Activated naive CD4-positive, alpha-beta T cell treated with anti-CD3 and anti-CD28 coated beads for 36 hours (primary cell): ENCODE measurements at regions of chr17 and their contacts with region 1.

Region 1: DNA sequence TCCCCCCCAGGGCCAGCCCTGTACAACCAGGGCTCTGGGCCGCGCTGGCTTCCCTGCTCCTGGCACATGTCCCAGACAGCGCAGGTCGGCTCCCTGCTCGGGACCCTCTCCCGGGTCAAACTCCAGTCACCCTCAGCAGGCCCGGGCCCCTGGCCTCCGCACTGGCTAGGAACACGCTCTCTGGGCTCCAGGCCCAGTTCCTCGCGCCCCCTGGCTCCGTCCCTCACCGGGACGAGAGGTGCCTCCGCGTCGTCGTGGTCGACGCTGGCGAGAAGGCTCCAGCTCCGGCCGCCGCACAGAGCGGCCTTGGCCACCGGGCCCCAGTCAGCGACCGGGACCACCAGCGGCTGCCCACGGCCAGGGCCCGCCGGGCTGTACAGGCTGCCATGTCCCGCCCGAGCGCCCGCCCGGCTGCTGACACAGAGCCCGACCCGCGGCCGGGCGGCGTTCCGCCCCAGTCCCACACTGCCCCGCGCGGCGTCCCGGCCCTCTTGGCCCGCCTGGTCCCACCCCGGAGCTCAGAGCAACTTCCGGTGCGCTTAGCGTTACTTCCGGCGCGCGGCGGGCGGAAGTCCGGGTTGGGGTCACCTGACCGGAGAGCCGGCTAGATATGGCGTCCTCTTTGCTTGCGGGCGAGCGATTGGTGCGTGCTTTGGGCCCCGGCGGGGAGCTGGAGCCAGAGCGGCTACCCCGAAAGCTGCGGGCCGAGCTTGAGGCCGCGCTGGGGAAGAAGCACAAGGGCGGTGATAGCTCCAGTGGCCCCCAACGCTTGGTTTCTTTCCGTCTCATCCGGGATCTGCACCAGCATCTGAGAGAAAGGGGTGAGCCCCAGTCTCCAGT is at the start of gene POLDIP2:
- DNase-seq: peak; percentile 97
- H3K4me3 Mint-ChIP-seq: peak within 1 kb of the TSS; percentile 94
- H3K27ac Mint-ChIP-seq: peak within 1 kb of the TSS; percentile 74
- H3K4me1 Mint-ChIP-seq: peaks cover 33% of the 10 kb centered on the region
- H3K27me3 Mint-ChIP-seq: no peaks in the 10 kb centered on the region
- total RNA-seq, gene POLDIP2: 74.6 to 76.5 TPM

Region 2: DNA sequence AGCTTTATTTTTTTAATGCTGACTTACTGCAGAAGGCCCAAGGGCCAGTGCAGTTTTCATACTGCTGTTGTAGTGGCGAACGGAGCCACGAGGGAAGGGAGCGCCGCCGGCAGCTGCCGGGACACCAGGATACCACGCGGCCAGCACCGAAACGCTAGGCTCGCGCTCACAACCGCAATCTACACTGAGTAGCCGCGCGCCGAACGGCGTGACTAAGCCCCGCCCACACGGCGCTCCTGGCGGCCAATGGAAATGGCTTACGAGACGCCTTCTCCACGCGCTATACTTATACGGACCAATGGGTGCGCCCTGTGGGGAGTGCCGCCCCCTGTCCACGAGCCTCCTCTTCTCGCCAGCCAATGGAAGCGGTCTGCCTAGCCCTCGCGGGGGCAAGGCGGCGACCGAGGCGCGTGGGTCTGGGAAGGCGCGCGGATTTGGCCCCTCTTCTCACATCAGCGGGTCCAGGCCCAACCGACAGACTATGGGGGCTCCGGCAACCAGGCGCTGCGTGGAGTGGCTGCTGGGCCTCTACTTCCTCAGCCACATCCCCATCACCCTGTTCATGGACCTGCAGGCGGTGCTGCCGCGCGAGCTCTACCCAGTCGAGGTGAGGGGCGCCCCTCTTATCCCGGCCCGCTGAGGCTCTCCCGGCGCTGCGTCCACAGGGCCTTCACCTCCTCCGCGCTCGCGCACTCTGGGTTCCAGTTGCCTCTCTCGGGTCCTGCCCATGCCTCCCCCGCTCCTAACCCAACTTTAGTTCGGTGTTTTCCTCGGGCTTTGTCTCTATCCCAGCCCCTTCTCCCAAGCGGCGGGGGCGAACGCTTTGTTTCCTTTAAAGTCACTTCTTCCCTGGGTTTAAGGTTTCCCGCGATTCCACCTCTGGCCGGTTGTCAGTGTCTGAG is 38.3 kb before region 1 on chr17 and contains the start of gene TMEM97:
- CTCF ChIA-PET with region 1: interaction called, 4 read pairs
- intact Hi-C with region 1: loop called (anchors 5 kb)
- DNase-seq: peak; percentile 95
- H3K4me3 Mint-ChIP-seq: peak within 1 kb of the TSS; percentile 81
- H3K27ac Mint-ChIP-seq: peak within 1 kb of the TSS; percentile 75
- H3K4me1 Mint-ChIP-seq: peaks cover 24% of the 10 kb centered on the region
- H3K27me3 Mint-ChIP-seq: no peaks in the 10 kb centered on the region
- total RNA-seq, gene TMEM97: 25.1 to 26.0 TPM

Region 3: DNA sequence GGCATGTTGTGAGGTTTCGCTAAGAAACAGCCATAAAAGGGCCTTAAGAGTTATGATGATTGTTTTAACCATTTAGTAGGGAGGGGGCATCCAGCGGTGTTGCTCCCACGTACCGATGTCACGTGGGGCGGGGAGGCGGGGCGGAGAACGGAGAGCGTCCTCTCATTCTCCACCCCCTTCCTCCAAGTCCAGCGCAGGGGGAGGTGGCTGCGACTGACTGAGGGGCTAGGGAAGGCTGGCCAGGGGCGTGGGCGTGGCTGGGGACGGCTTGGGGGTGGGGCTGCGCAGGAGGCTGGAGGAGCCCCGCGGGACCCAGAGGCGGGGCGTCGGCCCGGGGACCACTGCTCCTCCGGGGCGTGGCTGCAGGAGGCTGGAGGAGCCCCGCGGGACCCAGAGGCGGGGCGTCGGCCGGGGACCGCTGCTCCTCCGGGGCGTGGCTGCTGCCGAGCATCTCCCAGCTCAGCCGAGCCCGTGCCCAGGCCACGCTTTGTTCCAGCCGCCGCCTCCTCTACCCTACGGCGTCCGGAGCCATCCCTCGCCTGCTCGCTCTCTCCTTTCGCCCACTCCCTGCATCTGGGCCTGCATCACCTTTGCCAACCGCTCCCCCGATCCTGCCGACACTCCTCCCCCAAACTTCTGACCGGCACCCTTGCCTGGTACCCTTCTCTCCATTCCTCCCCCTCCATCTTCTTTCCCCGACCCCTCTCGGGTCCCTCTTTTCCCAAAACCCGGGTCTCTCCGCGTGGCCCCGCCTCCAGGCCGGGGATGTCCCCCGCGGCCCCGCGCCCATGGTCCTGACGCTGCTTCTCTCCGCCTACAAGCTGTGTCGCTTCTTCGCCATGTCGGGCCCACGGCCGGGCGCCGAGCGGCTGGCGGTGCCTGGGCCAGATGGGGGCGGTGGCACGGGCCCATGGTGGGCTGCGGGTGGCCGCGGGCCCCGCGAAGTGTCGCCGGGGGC is 14.2 kb after region 1 on chr17 and contains the start of gene SARM1:
- CTCF ChIA-PET with region 1: no interaction called
- intact Hi-C with region 1: loop called (anchors 1 kb)
- DNase-seq: peak; percentile 85
- H3K4me3 Mint-ChIP-seq: peak within 1 kb of the TSS; percentile 89
- H3K27ac Mint-ChIP-seq: peak within 1 kb of the TSS; percentile 47
- H3K4me1 Mint-ChIP-seq: peaks cover 21% of the 10 kb centered on the region
- H3K27me3 Mint-ChIP-seq: no peaks in the 10 kb centered on the region
- total RNA-seq, gene SARM1: 11.7 to 12.3 TPM

Region 4: DNA sequence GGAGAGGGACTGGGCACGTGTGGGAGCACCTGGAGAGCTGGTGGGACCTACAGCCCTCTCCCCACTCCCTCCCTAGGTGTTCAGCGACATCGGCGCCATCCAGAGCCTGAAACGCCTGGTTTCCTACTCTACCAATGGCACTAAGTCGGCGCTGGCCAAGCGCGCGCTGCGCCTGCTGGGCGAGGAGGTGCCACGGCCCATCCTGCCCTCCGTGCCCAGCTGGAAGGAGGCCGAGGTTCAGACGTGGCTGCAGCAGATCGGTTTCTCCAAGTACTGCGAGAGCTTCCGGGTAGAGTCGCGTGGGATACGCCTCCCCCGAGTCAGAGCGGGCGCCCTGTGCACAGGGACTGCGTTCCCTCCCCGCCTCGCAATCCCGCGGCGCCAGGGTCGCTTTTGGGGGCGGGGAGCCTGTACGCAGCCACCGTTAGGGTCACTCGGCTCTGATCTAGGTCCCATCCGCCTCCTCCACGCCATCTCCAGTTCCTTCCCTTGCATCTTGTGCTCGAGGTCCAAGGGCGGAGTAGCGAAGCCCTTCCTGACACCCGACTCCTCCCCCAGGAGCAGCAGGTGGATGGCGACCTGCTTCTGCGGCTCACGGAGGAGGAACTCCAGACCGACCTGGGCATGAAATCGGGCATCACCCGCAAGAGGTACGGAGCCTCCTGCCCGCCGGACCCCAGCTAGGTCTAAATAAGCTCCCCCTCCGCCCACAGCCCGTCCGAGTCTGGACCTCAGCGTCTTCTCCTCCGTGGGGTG is 27.2 kb after region 1 on chr17:
- CTCF ChIA-PET with region 1: interaction called, 4 read pairs
- intact Hi-C with region 1: loop called (anchors 1 kb)
- DNase-seq: peak; percentile 81
- H3K4me3 Mint-ChIP-seq: peak overlapping the region; percentile 87
- H3K27ac Mint-ChIP-seq: peak overlapping the region; percentile 9
- H3K4me1 Mint-ChIP-seq: peaks cover 23% of the 10 kb centered on the region
- H3K27me3 Mint-ChIP-seq: peaks cover 12% of the 10 kb centered on the region

Region 5: DNA sequence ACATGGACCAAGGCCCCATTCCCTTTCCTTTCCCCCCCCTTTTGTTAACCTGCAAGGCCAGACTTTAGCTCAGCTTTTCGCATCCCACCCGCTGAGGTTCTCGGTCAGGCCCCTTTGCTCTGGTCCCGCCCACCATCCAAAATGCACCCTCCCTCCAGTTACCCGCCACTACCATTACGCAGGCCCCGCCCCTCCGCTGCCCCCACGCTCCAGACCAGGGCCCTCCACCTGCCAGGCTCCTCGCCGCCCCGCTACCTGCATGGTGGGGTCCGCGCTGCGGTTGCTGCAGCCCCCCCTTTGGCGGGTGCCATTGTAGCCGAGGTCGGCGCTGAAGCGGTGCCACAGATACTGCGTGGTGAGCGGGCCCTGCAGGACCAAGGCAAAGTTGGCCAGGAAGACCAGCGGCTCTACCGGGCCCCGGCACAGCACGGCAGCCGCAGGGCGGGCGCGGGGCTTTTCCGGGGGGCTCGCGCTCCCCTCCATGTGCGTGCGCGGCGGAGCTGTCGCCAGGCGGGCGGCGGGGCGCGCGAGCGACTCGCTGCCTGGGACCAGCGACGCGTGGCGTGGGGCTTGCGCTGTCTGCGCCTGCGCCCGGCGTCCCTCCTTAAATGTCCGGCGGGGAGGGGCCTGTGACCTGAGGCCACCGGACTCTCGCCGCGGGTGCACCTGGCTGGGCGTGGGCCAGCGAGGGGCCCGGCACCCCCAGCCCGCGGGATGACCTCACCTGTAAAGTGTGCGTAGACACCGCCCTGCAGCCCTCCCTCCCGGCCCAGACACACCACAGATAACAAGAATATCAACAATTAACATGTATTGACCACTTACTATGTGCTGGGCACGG is 48.6 kb after region 1 on chr17 and contains the start of gene SLC46A1:
- CTCF ChIA-PET with region 1: interaction called, 5 read pairs
- intact Hi-C with region 1: loop called (anchors 5 kb)
- DNase-seq: peak; percentile 51
- H3K4me3 Mint-ChIP-seq: peak within 1 kb of the TSS; percentile 74
- H3K27ac Mint-ChIP-seq: no peak within 1 kb of the TSS
- H3K4me1 Mint-ChIP-seq: peaks cover 6% of the 10 kb centered on the region
- H3K27me3 Mint-ChIP-seq: peaks cover 2% of the 10 kb centered on the region
- total RNA-seq, gene SLC46A1: 1.8 to 2.4 TPM

Region 6: DNA sequence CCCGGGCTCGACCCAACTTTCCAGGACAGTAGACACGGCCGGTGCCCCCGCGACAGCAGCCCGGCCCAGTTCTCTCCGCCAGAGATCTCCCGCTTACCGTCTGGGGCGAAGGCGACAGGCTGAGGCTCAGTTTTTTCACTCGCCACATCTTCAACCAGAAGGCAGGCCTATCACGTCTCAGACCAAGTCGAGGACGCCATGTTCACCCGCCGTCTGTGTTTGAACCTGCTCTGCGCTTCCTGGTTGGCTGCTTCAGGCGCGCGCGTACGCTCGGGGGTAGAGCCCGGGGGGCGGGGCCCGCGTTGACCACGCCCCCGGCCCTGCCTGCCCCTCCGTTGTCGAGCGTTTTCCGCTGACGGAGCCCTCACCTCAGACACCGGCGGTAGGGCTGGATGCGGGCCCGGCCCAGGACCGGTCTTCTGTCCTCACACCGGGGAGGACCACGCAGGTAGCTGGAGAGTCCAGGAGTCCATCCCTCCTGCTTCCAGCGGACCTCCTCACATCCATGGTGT is 241.6 kb after region 1 on chr17 and contains the start of gene SPAG5:
- CTCF ChIA-PET with region 1: no interaction called
- intact Hi-C with region 1: loop called (anchors 1 kb)
- DNase-seq: peak; percentile 96
- H3K4me3 Mint-ChIP-seq: peak within 1 kb of the TSS; percentile 95
- H3K27ac Mint-ChIP-seq: peak within 1 kb of the TSS; percentile 94
- H3K4me1 Mint-ChIP-seq: peaks cover 15% of the 10 kb centered on the region
- H3K27me3 Mint-ChIP-seq: no peaks in the 10 kb centered on the region
- total RNA-seq, gene SPAG5: 210 to 216 TPM